WTC11 (cell line): ENCODE measurements at regions of chr22 and their contacts with region 1.

Region 1: DNA sequence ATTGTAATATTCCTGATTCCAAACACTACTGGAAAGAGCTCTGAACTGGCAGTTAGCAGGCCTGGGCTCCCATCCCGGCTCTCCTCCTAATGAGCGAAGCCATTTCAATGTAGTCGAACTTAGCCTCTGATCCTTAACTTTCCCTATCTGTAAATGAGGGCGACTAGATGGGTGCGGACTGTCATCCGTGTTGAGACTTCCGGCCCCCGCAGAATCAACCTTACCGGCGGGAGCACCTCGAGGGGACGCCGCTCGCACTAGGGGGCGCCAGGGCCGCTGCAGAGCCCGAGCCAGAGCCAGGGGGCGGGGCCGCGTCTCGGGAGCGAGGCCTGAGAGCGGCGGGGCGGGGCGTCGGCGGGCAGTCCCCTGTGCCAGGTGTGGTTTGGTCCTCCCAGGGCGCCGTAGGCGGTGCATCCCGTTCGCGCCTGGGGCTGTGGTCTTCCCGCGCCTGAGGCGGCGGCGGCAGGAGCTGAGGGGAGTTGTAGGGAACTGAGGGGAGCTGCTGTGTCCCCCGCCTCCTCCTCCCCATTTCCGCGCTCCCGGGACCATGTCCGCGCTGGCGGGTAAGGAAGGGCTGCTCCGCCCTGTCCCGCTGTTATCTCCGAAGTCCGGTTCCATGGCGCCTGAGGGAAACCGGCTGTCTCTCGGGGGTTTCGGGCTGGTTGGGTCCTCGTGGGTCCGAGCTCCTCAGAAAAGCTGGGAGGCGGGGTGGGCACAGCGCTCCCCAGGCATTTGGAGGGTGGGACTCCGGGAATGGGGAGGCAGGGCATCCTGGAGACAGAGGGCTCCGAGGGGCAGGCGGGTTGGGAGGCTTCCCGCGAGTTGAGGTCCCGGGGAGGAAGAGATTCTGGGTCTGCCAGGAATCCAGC is at the start of gene LIMK2:
- DNase-seq: peak; percentile 97
- ATAC-seq: peak; percentile 96
- H3K4me3 Mint-ChIP-seq: peak within 1 kb of the TSS; percentile 88
- H3K27ac Mint-ChIP-seq: no peak within 1 kb of the TSS
- H3K4me1 Mint-ChIP-seq: peaks cover 20% of the 10 kb centered on the region
- H3K27me3 Mint-ChIP-seq: no peaks in the 10 kb centered on the region
- CTCF ChIP-seq: peak; percentile 38; the same call in 1 of the 2 replicates
- total RNA-seq, gene LIMK2: 33.1 to 42.8 TPM (median 33.6 TPM) in 3 replicates

Region 2: GRCh38 chr22:31029276-31029675 is 182.8 kb before region 1 on chr22:
- CTCF ChIA-PET with region 1: no interaction called
- POLR2A ChIA-PET with region 1: no interaction called
- DNase-seq: no peak
- ATAC-seq: no peak
- H3K4me3 Mint-ChIP-seq: no peak overlapping the region
- H3K27ac Mint-ChIP-seq: no peak overlapping the region
- H3K4me1 Mint-ChIP-seq: no peaks in the 10 kb centered on the region
- H3K27me3 Mint-ChIP-seq: no peaks in the 10 kb centered on the region; the same call in 1 of the 2 replicates
- CTCF ChIP-seq: no peak

Region 3: DNA sequence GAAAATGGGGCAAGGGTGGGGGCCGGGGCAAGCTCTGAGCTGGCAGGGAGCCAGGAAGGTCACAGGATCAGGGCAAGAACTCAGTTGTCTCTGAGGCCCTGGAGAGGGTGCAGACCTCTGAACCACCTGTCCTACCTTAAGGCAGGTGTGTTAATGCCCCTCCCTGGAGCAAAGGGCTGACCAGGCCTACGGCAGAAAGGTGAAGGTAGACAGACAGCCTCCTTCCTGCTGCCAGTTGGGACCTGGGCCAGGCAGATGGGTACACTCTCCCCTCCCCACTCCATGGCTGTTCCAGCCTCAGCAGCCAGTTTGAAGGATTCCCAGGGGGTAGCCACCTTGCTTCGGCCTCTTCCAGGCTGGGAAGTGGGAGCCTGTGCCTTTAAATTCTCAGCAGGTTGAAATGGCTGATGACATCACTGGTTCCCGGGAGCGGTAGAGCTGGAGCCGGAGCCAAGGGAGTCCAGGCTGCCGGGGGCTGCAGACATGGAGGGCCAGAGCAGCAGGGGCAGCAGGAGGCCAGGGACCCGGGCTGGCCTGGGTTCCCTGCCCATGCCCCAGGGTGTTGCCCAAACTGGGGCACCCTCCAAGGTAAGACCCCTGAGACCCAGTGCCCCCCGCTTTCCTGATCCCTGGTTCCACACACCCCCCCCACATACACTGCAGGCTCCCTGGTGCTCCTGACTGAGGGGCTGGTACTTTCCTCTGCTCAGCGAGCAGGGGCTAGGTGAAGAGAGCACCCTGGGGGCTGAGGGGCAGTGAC is 89.4 kb before region 1 on chr22 and contains the start of gene INPP5J:
- CTCF ChIA-PET with region 1: no interaction called
- POLR2A ChIA-PET with region 1: no interaction called
- DNase-seq: peak; percentile 65
- ATAC-seq: peak; percentile 54
- H3K4me3 Mint-ChIP-seq: peak within 1 kb of the TSS; percentile 58
- H3K27ac Mint-ChIP-seq: no peak within 1 kb of the TSS
- H3K4me1 Mint-ChIP-seq: peaks cover 34% of the 10 kb centered on the region
- H3K27me3 Mint-ChIP-seq: peaks cover 3% of the 10 kb centered on the region; the same call in 1 of the 2 replicates
- CTCF ChIP-seq: no peak
- total RNA-seq, gene INPP5J: 6.2 to 9.0 TPM (median 7.7 TPM) in 3 replicates

Region 4: GRCh38 chr22:31173386-31174145 is 38.5 kb before region 1 on chr22:
- CTCF ChIA-PET with region 1: no interaction called
- POLR2A ChIA-PET with region 1: no interaction called
- DNase-seq: no peak
- ATAC-seq: no peak
- H3K4me3 Mint-ChIP-seq: no peak overlapping the region
- H3K27ac Mint-ChIP-seq: no peak overlapping the region
- H3K4me1 Mint-ChIP-seq: 0 out of 2 replicates have a peak, but pooled peaks cover 4% of the 10 kb centered on the region
- H3K27me3 Mint-ChIP-seq: no peaks in the 10 kb centered on the region
- CTCF ChIP-seq: no peak

Region 5: GRCh38 chr22:31248138-31248745 is 36.1 kb after region 1 on chr22:
- CTCF ChIA-PET with region 1: interaction called, 16 read pairs
- POLR2A ChIA-PET with region 1: no interaction called
- DNase-seq: peak; percentile 80
- ATAC-seq: peak; percentile 96
- H3K4me3 Mint-ChIP-seq: peak overlapping the region; percentile 64
- H3K27ac Mint-ChIP-seq: peak overlapping the region; percentile 92
- H3K4me1 Mint-ChIP-seq: peaks cover 36% of the 10 kb centered on the region
- H3K27me3 Mint-ChIP-seq: no peaks in the 10 kb centered on the region
- CTCF ChIP-seq: no peak

Region 6: GRCh38 chr22:31253949-31254348 is 41.9 kb after region 1 on chr22:
- CTCF ChIA-PET with region 1: interaction called, 15 read pairs
- POLR2A ChIA-PET with region 1: interaction called, 3 read pairs
- DNase-seq: peak; percentile 42
- ATAC-seq: peak; percentile 89
- H3K4me3 Mint-ChIP-seq: no peak overlapping the region
- H3K27ac Mint-ChIP-seq: peak overlapping the region; percentile 70; the same call in 1 of the 2 replicates
- H3K4me1 Mint-ChIP-seq: peaks cover 20% of the 10 kb centered on the region
- H3K27me3 Mint-ChIP-seq: no peaks in the 10 kb centered on the region
- CTCF ChIP-seq: no peak

Region 7: DNA sequence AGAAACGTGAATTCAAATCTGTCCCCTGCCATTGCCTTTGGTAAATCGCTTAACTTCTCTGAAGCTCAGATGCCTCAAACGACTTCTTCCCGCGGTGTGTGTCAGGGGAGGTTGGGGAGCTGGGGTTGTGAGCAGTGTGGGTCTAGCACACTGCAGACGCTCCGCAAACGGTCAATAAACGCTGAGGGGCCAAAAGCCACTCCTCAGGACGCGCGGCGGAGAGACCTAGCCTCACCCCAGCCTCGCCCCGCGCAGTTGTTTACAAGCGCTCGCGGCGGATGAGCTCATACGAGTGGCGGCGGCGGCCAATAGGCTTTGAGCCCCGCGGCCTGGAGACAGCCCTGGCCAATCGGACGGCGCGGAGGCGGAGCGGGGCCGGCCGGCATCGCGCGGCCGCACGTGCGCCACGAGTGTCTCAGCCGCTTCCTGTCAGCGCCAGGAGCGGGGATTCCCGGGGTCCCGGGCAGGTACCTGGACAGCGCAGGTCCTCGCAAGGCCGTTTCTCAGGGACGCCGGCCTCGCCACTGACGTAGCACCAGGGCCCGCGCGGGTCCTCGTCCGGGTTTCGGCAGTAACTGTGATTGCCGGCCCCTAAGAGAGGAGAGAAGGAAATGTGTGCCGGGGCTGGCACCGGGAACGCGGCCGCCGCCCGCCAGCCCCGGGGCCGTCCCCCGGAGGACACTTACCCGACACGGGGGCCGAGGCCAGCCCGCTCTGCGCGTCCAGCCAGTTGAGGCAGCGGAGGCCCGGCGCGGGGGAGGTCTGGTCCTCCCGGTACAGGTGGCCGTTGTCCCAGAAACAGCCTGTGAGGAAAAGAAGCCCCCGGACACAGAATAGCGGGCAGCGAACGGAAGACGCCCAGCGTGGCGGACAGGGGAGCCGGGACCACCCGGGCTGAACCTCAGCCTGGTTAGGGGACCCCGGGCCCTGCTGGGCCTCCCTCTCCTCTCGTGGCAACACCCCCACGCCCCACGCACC is 78.7 kb after region 1 on chr22:
- CTCF ChIA-PET with region 1: interaction called, 22 read pairs
- POLR2A ChIA-PET with region 1: interaction called, 6 read pairs
- DNase-seq: peak; percentile 92
- ATAC-seq: peak; percentile 88
- H3K4me3 Mint-ChIP-seq: peak overlapping the region; percentile 74
- H3K27ac Mint-ChIP-seq: peak overlapping the region; percentile 71
- H3K4me1 Mint-ChIP-seq: peaks cover 26% of the 10 kb centered on the region
- H3K27me3 Mint-ChIP-seq: peaks cover 25% of the 10 kb centered on the region
- CTCF ChIP-seq: no peak

Region 8: GRCh38 chr22:31477329-31477728 is 265.2 kb after region 1 on chr22:
- CTCF ChIA-PET with region 1: no interaction called
- POLR2A ChIA-PET with region 1: no interaction called
- DNase-seq: no peak
- ATAC-seq: no peak
- H3K4me3 Mint-ChIP-seq: no peak overlapping the region
- H3K27ac Mint-ChIP-seq: no peak overlapping the region
- H3K4me1 Mint-ChIP-seq: no peaks in the 10 kb centered on the region
- H3K27me3 Mint-ChIP-seq: no peaks in the 10 kb centered on the region
- CTCF ChIP-seq: no peak